ENCODE measurements at regions of chr5 and their contacts with region 1.

Region 1: GRCh38 chr5:88729084-88729828 is 153.7 kb downstream of the MEF2C start:
- DNase-seq: peak; percentile 89
- ATAC-seq: peak; percentile 38
- H3K4me3 ChIP-seq: no peak overlapping the region
- H3K4me3 Mint-ChIP-seq: peak overlapping the region; percentile 15
- H3K27ac ChIP-seq: peak overlapping the region; percentile 26 to 85
- H3K27ac Mint-ChIP-seq: peak overlapping the region; percentile 76
- H3K4me1 ChIP-seq: peaks cover 29 to 35% of the 10 kb centered on the region in 2 donors
- H3K4me1 Mint-ChIP-seq: peaks cover 42% of the 10 kb centered on the region
- H3K27me3 ChIP-seq: no peaks in the 10 kb centered on the region
- H3K27me3 Mint-ChIP-seq: no peaks in the 10 kb centered on the region
- CTCF ChIP-seq: peak; percentile 87

Region 2: GRCh38 chr5:88769165-88769564 is 39.9 kb after region 1 on chr5:
- CTCF ChIA-PET with region 1: interaction called, 50 read pairs
- POLR2A ChIA-PET with region 1: no interaction called
- intact Hi-C with region 1: no loop called
- DNase-seq: no peak
- ATAC-seq: no peak
- H3K4me3 ChIP-seq: no peak overlapping the region
- H3K4me3 Mint-ChIP-seq: no peak overlapping the region
- H3K27ac ChIP-seq: peak overlapping the region in 1 of 2 donors; percentile 44
- H3K27ac Mint-ChIP-seq: peak overlapping the region; percentile 61
- H3K4me1 ChIP-seq: peaks cover 13 to 15% of the 10 kb centered on the region in 2 donors
- H3K4me1 Mint-ChIP-seq: peaks cover 60% of the 10 kb centered on the region
- H3K27me3 ChIP-seq: no peaks in the 10 kb centered on the region
- H3K27me3 Mint-ChIP-seq: no peaks in the 10 kb centered on the region
- CTCF ChIP-seq: no peak

Region 3: GRCh38 chr5:88833371-88834130 is 104.3 kb after region 1 on chr5:
- CTCF ChIA-PET with region 1: interaction called, 18 read pairs
- POLR2A ChIA-PET with region 1: interaction called, 4 read pairs
- intact Hi-C with region 1: no loop called
- DNase-seq: peak; percentile 65
- ATAC-seq: peak; percentile 66
- H3K4me3 ChIP-seq: peak overlapping the region in 3 of 5 experiments; percentile 1 to 47 (median 16)
- H3K4me3 Mint-ChIP-seq: peak overlapping the region; percentile 87
- H3K27ac ChIP-seq: peak overlapping the region; percentile 58 to 94
- H3K27ac Mint-ChIP-seq: peak overlapping the region; percentile 94
- H3K4me1 ChIP-seq: peaks cover 71 to 86% of the 10 kb centered on the region in 2 donors
- H3K4me1 Mint-ChIP-seq: peaks cover 77% of the 10 kb centered on the region
- H3K27me3 ChIP-seq: no peaks in the 10 kb centered on the region
- H3K27me3 Mint-ChIP-seq: no peaks in the 10 kb centered on the region
- CTCF ChIP-seq: no peak

Region 4: GRCh38 chr5:89303033-89303480 is 573.8 kb after region 1 on chr5:
- CTCF ChIA-PET with region 1: interaction called, 3 read pairs
- POLR2A ChIA-PET with region 1: no interaction called
- intact Hi-C with region 1: loop called (anchors 10 kb)
- DNase-seq: peak; percentile 42
- ATAC-seq: peak; percentile 52
- H3K4me3 ChIP-seq: no peak overlapping the region
- H3K4me3 Mint-ChIP-seq: peak overlapping the region; percentile 56
- H3K27ac ChIP-seq: peak overlapping the region; percentile 11 to 80
- H3K27ac Mint-ChIP-seq: peak overlapping the region; percentile 89
- H3K4me1 ChIP-seq: peaks cover 36 to 41% of the 10 kb centered on the region in 2 donors
- H3K4me1 Mint-ChIP-seq: peaks cover 52% of the 10 kb centered on the region
- H3K27me3 ChIP-seq: no peaks in the 10 kb centered on the region
- H3K27me3 Mint-ChIP-seq: no peaks in the 10 kb centered on the region
- CTCF ChIP-seq: no peak

Region 5: GRCh38 chr5:90161414-90161813 is 1432.2 kb after region 1 on chr5:
- CTCF ChIA-PET with region 1: interaction called, 16 read pairs
- POLR2A ChIA-PET with region 1: no interaction called
- intact Hi-C with region 1: loop called (anchors 5 kb)
- DNase-seq: peak; percentile 49
- ATAC-seq: peak; percentile 68
- H3K4me3 ChIP-seq: no peak overlapping the region
- H3K4me3 Mint-ChIP-seq: no peak overlapping the region
- H3K27ac ChIP-seq: no peak overlapping the region
- H3K27ac Mint-ChIP-seq: no peak overlapping the region
- H3K4me1 ChIP-seq: no peaks in the 10 kb centered on the region
- H3K4me1 Mint-ChIP-seq: peaks cover 5% of the 10 kb centered on the region
- H3K27me3 ChIP-seq: no peaks in the 10 kb centered on the region
- H3K27me3 Mint-ChIP-seq: no peaks in the 10 kb centered on the region
- CTCF ChIP-seq: no peak

Region 6: GRCh38 chr5:90409318-90410177 is 1680.3 kb after region 1 on chr5 and contains the start of gene CETN3:
- CTCF ChIA-PET with region 1: interaction called, 6 read pairs
- POLR2A ChIA-PET with region 1: no interaction called
- intact Hi-C with region 1: loop called (anchors 5 kb)
- DNase-seq: peak; percentile 95
- ATAC-seq: peak; percentile 92
- H3K4me3 ChIP-seq: peak within 1 kb of the TSS; percentile 93 to 100 (median 98)
- H3K4me3 Mint-ChIP-seq: no peak within 1 kb of the TSS
- H3K27ac ChIP-seq: peak within 1 kb of the TSS; percentile 91 to 94
- H3K27ac Mint-ChIP-seq: no peak within 1 kb of the TSS
- H3K4me1 ChIP-seq: peaks cover 11 to 12% of the 10 kb centered on the region in 2 donors
- H3K4me1 Mint-ChIP-seq: peaks cover 5% of the 10 kb centered on the region
- H3K27me3 ChIP-seq: no peaks in the 10 kb centered on the region
- H3K27me3 Mint-ChIP-seq: no peaks in the 10 kb centered on the region
- CTCF ChIP-seq: no peak
- total RNA-seq, gene CETN3: 17.0 and 18.0 TPM in 2 replicates

Measured in B cell (primary cell).